Keratinocyte (primary cell): ENCODE measurements at regions of chr3 and their contacts with region 1.

Region 1: DNA sequence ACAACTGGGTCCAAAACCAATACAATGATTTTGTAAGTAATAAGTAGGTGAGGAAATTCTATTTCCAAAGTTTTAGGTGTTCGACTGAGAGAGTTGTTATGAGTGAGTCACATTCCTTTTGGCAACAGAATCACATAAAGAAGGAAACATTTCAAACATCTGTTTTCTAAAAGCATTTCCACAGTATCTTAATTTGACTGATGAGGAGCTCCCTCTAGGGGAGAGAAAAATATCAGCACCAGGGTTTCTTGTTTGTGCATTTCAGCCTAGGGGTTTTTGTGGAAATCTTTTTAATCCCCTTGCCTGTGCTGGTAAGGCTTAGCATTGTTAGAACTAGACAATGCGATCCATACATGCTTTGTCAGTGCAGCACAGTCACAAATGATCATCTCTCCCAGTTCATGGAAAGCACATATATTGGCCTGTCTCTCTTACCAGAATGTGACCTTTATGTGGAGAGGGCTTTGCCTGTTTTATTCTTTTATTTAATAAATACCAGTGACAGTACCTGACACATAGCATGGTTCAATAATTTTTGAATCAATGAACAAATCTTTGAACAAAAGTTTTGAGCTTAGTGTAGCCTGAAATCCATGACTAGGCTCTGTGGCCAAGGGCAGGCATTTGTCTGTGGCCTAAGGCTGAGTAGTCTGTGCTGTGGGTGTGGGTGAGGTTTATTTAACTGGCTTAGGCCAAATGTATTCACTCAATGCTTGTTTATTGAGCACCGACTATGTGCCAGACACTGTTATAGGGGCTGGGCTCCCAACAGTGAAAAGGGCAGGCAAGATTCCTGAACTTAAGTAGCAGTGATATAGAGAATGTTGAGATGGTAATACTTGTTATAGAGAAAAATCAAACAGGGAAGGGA is 21.1 kb upstream of the IQCF6 start:
- DNase-seq: peak; percentile 38
- H3K4me3 ChIP-seq: no peak overlapping the region
- H3K27ac ChIP-seq: no peak overlapping the region
- H3K4me1 ChIP-seq: peaks cover 19% of the 10 kb centered on the region
- H3K27me3 ChIP-seq: no peaks in the 10 kb centered on the region
- CTCF ChIP-seq: peak in 2 of 3 experiments; percentile 62 to 72

Region 2: DNA sequence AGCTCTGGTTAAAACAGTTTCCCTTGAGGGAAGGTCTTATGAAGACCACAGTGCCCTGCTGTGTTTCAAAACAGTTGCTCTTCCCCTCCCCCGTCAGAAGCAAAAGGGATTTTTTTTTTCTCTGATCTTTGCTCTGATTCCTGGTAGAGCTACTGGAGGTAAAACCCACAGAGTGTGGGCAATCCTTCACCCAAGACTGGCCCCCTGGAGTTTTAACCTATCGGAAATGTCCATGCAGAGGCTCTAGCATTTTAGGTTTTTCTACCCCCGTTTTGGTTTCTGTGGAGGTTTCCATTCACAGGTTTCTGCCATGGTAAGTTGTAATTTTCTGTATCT is 65.6 kb before region 1 on chr3:
- dilution Hi-C with region 1: loop called (anchors 5 kb)
- DNase-seq: no peak
- H3K4me3 ChIP-seq: no peak overlapping the region
- H3K27ac ChIP-seq: no peak overlapping the region
- H3K4me1 ChIP-seq: peaks cover 11% of the 10 kb centered on the region
- H3K27me3 ChIP-seq: no peaks in the 10 kb centered on the region
- CTCF ChIP-seq: no peak

Region 3: DNA sequence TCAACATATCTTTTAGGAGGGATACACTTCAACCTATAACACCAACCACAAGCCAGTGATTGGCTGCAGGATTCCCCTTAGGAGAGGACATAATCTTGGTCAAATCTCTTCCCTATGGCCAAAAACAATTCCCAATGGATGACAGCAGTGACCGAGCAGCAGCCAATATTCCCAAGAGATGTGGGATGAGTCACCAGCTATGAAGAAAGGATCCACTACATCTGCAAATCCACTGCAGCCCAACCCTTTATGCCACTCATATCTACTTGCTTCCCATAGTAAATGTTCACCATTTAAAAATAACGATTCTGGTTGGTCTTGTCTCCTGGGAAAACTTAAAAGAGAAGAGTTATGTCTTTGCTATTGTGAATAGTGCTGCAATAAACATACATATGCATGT is 79.8 kb after region 1 on chr3:
- dilution Hi-C with region 1: no loop called
- DNase-seq: no peak
- H3K4me3 ChIP-seq: no peak overlapping the region
- H3K27ac ChIP-seq: no peak overlapping the region
- H3K4me1 ChIP-seq: no peaks in the 10 kb centered on the region
- H3K27me3 ChIP-seq: peaks cover 5% of the 10 kb centered on the region
- CTCF ChIP-seq: no peak

Region 4: DNA sequence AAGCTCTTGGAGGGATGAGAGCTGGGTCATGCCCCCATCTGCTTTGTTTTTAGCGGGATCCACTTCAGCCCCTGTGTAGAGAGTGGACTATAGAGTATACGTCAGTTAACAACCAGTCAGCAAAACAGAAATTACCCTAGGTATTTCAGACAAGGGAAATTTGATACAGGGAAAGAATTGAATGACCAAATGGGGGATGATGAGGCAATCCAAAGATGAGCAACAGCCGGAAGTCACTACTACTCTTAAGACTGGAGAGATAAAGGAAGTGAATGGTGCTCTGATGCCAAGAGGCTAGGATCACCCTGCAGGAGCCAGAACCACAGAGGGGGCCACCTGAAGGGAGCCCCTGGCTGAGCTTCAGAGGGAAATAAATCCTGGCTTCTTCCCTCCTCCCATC is 153.3 kb after region 1 on chr3:
- dilution Hi-C with region 1: no loop called
- DNase-seq: no peak
- H3K4me3 ChIP-seq: no peak overlapping the region
- H3K27ac ChIP-seq: no peak overlapping the region
- H3K4me1 ChIP-seq: peaks cover 11% of the 10 kb centered on the region
- H3K27me3 ChIP-seq: peaks cover 28% of the 10 kb centered on the region
- CTCF ChIP-seq: no peak